Aorta (tissue), 5 donors: ENCODE measurements at regions of chr17 and their contacts with region 1.

Region 1: DNA sequence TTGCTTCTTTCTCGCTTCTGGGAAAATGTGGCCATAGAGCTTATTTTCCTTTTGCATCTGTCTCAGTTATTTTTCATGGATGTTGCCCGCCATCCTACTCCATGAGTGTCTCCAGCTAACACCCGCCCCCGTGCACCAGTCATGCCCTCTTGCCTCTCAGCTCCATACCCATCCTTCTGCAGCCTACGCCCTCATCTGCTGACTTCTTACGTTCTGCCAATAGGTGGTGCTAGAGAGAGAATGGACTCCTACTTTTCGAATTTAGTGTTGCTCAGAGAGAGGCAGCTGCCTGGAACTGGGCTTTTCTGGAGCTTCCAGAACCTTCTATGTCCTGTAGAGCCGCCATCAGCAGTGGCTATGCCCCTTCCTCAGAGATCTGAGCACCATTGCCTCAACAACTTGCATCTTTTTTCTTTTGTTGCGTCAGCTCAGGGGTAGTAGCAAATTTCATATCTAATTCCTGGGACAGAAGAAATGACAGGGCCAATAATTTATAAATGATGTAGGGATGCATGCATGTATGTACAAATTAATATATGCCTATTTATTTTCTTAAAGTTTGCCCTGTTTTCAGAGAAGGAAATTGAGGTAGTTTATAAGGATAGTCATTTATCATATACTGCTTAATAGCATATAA is 119.7 kb upstream of the MYOCD start:
- DNase-seq: no peak
- ATAC-seq: peak; percentile 64
- H3K4me3 ChIP-seq: no peak overlapping the region
- H3K27ac ChIP-seq: no peak overlapping the region
- H3K4me1 ChIP-seq: peaks cover 0 to 5% of the 10 kb centered on the region in 2 donors
- H3K27me3 ChIP-seq: no peaks in the 10 kb centered on the region

Region 2: GRCh38 chr17:12365805-12366204 is 180.2 kb before region 1 on chr17:
- intact Hi-C with region 1: loop called in 1 of 2 experiments (anchors 5 kb)
- DNase-seq: peak; percentile 75 to 83
- ATAC-seq: peak; percentile 83
- H3K4me3 ChIP-seq: no peak overlapping the region
- H3K27ac ChIP-seq: peak overlapping the region; percentile 87 to 95
- H3K4me1 ChIP-seq: peaks cover 0 to 9% of the 10 kb centered on the region in 2 donors
- H3K27me3 ChIP-seq: no peaks in the 10 kb centered on the region

Region 3: GRCh38 chr17:12646761-12647422 is 100.9 kb after region 1 on chr17:
- intact Hi-C with region 1: no loop called
- DNase-seq: no peak
- ATAC-seq: no peak
- H3K4me3 ChIP-seq: no peak overlapping the region
- H3K27ac ChIP-seq: no peak overlapping the region
- H3K4me1 ChIP-seq: peaks cover 0 to 2% of the 10 kb centered on the region in 2 donors
- H3K27me3 ChIP-seq: no peaks in the 10 kb centered on the region

Region 4: DNA sequence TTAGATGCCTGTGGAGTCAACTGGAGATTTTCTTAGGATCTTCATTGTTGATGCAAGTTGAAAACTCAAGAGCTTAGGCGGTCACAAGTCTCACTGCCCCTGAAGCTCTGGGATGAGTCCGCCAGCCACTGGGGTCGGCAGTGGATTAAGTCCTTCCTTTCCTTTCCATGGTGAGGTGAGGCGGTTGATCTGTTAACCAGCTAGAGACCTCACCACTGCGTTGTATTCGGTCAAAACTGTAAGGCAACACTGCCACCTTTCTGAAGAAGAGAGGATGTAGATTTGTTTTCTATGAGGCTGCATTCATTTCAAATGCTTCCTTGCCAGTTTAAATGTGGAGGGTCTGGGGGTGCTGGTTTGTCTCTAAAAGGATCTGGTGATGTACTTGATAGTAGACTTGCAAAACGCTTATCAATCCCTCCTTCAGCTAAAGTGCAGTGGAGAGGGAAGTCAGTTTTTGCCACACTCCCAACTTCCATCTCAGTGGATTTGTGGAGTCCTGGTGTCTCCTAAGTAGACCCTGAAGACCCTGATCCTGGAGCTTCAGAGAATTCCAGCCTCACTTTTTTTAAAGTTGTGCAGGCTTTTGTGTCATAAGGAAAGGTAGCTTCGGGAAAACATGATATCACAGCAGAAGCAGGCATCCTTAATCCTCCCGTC is 121.4 kb after region 1 on chr17:
- intact Hi-C with region 1: loop called (anchors 2 to 5 kb)
- DNase-seq: no peak
- ATAC-seq: peak; percentile 76
- H3K4me3 ChIP-seq: peak overlapping the region; percentile 84 to 87
- H3K27ac ChIP-seq: peak overlapping the region; percentile 85 to 91
- H3K4me1 ChIP-seq: peaks cover 0 to 6% of the 10 kb centered on the region in 2 donors
- H3K27me3 ChIP-seq: no peaks in the 10 kb centered on the region

Region 5: DNA sequence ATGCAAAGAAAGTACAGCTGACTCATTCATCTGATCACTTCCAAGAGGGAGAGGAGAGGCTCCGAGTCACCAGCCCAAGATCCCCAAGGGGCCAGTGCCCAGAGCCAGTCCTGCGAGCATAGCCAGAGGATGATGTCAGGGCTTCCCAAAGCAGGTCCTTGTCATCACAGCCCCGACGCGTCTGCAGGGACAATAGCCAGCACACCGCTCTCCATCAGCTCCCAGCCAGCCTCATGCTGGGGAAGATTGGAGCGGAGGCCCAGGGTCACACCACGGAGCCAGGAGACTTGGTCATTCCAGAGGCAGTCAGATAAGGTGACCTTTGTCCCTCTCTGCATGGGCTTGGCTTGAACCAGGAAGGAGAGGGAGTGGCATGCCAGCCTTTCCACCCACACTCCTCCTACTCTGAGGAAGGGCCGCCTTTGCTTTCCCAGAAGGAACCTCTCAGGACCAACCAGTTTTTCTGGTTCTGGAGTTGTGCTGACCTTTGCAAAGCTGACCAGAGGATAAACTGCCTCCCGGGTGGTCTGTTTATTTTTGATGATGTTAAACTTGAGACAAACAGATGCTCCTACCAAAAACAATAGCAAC is 185.0 kb after region 1 on chr17:
- intact Hi-C with region 1: loop called in 1 of 2 experiments (anchors 5 kb)
- DNase-seq: peak; percentile 92 to 95
- ATAC-seq: peak; percentile 89
- H3K4me3 ChIP-seq: no peak overlapping the region
- H3K27ac ChIP-seq: peak overlapping the region; percentile 6 to 99
- H3K4me1 ChIP-seq: peaks cover 0 to 11% of the 10 kb centered on the region in 2 donors
- H3K27me3 ChIP-seq: no peaks in the 10 kb centered on the region

Region 6: GRCh38 chr17:13002766-13003451 is 456.9 kb after region 1 on chr17:
- intact Hi-C with region 1: loop called in 1 of 2 experiments (anchors 10 kb)
- DNase-seq: peak; percentile 73 to 93
- ATAC-seq: peak; percentile 90
- H3K4me3 ChIP-seq: no peak overlapping the region
- H3K27ac ChIP-seq: no peak overlapping the region
- H3K4me1 ChIP-seq: no peaks in the 10 kb centered on the region
- H3K27me3 ChIP-seq: no peaks in the 10 kb centered on the region